Activated CD8-positive, alpha-beta T cell treated with anti-CD3 and anti-CD28 coated beads for 36 hours (primary cell): ENCODE measurements at regions of chr1 and their contacts with region 1.

Region 1: GRCh38 chr1:25037174-25038074 is 107.3 kb upstream of the RUNX3 start:
- DNase-seq: peak; percentile 72
- ATAC-seq: peak; percentile 45
- H3K4me3 Mint-ChIP-seq: peak overlapping the region; percentile 22
- H3K27ac Mint-ChIP-seq: peak overlapping the region; percentile 65
- H3K4me1 Mint-ChIP-seq: peaks cover 59% of the 10 kb centered on the region
- H3K27me3 Mint-ChIP-seq: no peaks in the 10 kb centered on the region
- CTCF ChIP-seq: peak; percentile 85

Region 2: GRCh38 chr1:24779689-24780464 is 257.5 kb before region 1 on chr1:
- CTCF ChIA-PET with region 1: no interaction called
- POLR2A ChIA-PET with region 1: no interaction called
- intact Hi-C with region 1: no loop called
- DNase-seq: no peak
- ATAC-seq: no peak
- H3K4me3 Mint-ChIP-seq: no peak overlapping the region
- H3K27ac Mint-ChIP-seq: no peak overlapping the region
- H3K4me1 Mint-ChIP-seq: no peaks in the 10 kb centered on the region
- H3K27me3 Mint-ChIP-seq: peaks cover 2% of the 10 kb centered on the region
- CTCF ChIP-seq: no peak

Region 3: DNA sequence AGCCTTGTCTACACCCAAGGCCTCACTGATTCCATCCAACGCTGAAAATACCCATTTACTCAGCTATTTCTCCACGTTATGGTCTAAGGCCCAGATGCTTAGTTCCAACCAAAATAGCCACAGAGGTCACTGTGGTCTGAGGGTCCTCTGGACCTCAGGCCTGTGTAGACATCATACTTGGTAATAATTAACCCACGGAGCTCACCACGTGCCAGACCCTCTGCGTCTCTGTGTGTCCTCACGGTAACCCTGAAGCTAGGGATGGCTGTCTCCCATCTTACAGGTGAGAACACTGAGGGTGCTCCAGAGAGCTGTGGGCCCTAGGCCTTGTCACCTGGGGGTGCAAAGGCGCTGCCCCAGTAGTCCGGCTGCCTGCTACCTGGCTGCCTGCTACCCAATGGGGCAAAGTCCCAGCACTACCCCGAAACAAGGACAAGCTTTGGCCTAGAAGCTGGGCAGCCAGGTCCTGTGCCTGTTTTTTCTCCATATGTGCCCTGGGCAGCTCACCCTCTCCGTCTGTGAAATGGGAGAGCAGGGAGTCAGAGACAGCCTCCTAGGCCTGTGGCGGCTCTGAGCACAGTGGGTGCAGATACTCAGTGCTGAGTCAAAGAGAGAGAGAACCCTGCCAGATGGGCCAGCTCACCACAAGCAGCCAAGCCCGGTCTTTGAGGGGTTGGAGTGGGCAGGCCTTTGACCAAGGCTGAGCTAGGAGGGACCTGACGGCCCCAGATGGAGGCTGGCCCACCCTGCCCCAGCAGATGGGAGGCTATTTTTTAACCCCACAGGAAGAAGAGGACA is 90.4 kb before region 1 on chr1:
- CTCF ChIA-PET with region 1: interaction called, 20 read pairs
- POLR2A ChIA-PET with region 1: interaction called, 11 read pairs
- intact Hi-C with region 1: no loop called
- DNase-seq: no peak
- ATAC-seq: peak; percentile 28
- H3K4me3 Mint-ChIP-seq: no peak overlapping the region
- H3K27ac Mint-ChIP-seq: peak overlapping the region; percentile 71
- H3K4me1 Mint-ChIP-seq: peaks cover 73% of the 10 kb centered on the region
- H3K27me3 Mint-ChIP-seq: no peaks in the 10 kb centered on the region
- CTCF ChIP-seq: no peak

Region 4: DNA sequence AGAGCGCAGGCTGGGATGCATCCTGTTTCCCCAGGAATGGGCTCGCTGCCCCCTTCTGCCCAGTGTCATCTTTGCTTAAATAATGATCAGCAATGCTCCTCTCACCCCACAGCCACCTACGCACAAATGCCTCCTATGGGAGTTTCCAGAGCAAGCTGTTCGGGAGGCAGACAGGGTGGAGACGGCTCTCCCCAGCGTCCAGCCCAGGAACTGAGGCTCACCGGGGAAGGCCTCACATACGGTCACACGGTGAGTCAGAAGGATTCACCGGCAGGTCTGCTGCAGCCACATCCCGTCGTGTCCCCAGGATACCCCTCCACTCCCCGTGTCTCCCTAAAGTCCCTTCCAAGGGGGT is 67.0 kb before region 1 on chr1:
- CTCF ChIA-PET with region 1: interaction called, 169 read pairs
- POLR2A ChIA-PET with region 1: interaction called, 159 read pairs
- intact Hi-C with region 1: loop called (anchors 2 kb)
- DNase-seq: peak; percentile 48
- ATAC-seq: no peak
- H3K4me3 Mint-ChIP-seq: peak overlapping the region; percentile 77
- H3K27ac Mint-ChIP-seq: peak overlapping the region; percentile 89
- H3K4me1 Mint-ChIP-seq: peaks cover 85% of the 10 kb centered on the region
- H3K27me3 Mint-ChIP-seq: no peaks in the 10 kb centered on the region
- CTCF ChIP-seq: peak; percentile 26

Region 5: GRCh38 chr1:24996983-24997893 is 40.2 kb before region 1 on chr1:
- CTCF ChIA-PET with region 1: interaction called, 28 read pairs
- POLR2A ChIA-PET with region 1: interaction called, 22 read pairs
- intact Hi-C with region 1: loop called (anchors 5 kb)
- DNase-seq: peak; percentile 99
- ATAC-seq: peak; percentile 74
- H3K4me3 Mint-ChIP-seq: peak overlapping the region; percentile 73
- H3K27ac Mint-ChIP-seq: peak overlapping the region; percentile 97
- H3K4me1 Mint-ChIP-seq: peaks cover 92% of the 10 kb centered on the region
- H3K27me3 Mint-ChIP-seq: no peaks in the 10 kb centered on the region
- CTCF ChIP-seq: no peak

Region 6: GRCh38 chr1:25022361-25023189 is 14.8 kb before region 1 on chr1:
- CTCF ChIA-PET with region 1: interaction called, 21 read pairs
- POLR2A ChIA-PET with region 1: interaction called, 19 read pairs
- intact Hi-C with region 1: no loop called
- DNase-seq: peak; percentile 99
- ATAC-seq: peak; percentile 84
- H3K4me3 Mint-ChIP-seq: peak overlapping the region; percentile 75
- H3K27ac Mint-ChIP-seq: peak overlapping the region; percentile 94
- H3K4me1 Mint-ChIP-seq: peaks cover 91% of the 10 kb centered on the region
- H3K27me3 Mint-ChIP-seq: no peaks in the 10 kb centered on the region
- CTCF ChIP-seq: no peak

Region 7: DNA sequence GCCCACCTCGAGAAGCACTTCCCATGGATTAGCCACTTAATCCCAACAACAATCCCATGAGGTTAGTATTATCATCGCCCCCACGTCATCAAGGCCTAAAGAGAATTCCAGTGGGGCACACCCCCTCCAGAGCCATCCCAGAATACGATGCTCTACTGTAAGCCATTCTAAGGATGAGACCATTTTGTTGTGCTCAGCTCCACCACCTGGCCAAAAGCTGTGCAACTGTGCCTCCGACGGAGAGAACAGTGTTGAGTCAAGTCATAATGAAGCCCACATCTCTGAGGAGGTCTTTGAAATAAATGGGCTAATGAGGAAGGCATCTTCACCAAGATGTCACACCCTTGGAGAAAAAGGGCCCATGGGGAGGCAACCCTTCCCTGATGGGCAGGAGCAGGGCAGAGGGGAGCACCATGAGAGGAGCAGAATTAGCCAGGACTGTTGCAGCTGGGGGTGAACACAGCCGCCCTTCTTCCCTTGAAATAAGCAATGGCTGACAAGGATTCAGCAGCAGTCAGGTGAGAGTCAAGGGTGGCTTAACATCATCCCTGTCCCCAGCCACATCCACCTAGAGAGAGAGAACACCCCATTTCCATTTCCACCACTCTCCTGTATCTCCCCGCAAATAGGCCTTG is 180.3 kb after region 1 on chr1:
- CTCF ChIA-PET with region 1: no interaction called
- POLR2A ChIA-PET with region 1: no interaction called
- intact Hi-C with region 1: no loop called
- DNase-seq: no peak
- ATAC-seq: no peak
- H3K4me3 Mint-ChIP-seq: no peak overlapping the region
- H3K27ac Mint-ChIP-seq: no peak overlapping the region
- H3K4me1 Mint-ChIP-seq: no peaks in the 10 kb centered on the region
- H3K27me3 Mint-ChIP-seq: no peaks in the 10 kb centered on the region
- CTCF ChIP-seq: no peak